Naive thymus-derived CD8-positive, alpha-beta T cell (primary cell): ENCODE measurements at regions of chr17 and their contacts with region 1.

Region 1: GRCh38 chr17:81519284-81519955 is 6.8 kb upstream of the ACTG1 start:
- DNase-seq: peak; percentile 59 to 83 (median 72)
- ATAC-seq: peak; percentile 64 to 78
- H3K4me3 Mint-ChIP-seq: peak overlapping the region in 5 of 10 donors; percentile 10 to 50 (median 48)
- H3K27ac Mint-ChIP-seq: no peak overlapping the region
- H3K4me1 Mint-ChIP-seq: peaks cover 5 to 32% (median 24%) of the 10 kb centered on the region in 4 donors
- H3K27me3 Mint-ChIP-seq: no peaks in the 10 kb centered on the region

Region 2: DNA sequence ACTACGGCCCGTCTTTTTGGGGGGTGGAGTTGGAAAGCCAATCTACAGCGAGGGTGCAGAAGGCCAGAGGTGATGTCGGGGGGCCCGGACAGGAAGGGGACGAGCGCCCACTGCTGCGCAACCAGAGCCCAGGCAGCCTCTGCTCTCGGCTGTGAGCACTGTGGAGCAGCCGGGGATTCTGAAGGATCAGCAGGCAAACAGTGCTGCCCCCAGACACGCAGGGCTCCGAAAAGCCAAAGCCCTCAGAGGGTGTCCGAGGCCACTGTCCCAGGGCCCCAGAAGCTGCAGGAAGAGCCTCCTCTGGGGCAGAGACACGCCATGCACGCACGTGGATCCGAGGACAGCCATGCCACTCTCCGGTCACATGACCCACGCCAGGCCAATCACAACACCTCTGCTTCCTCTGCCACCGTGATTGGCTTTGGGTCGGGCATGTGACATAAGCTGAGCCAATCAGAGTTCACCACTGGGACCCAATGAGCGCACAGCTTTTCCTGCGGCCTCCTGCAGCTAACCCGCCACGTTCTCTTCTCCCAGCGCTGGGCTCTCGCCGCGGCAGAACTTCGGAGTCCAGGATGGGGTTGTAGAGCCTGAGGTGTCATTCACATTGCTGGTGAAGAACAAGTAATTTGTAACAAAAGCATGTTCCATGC is 47.5 kb before region 1 on chr17:
- POLR2A ChIA-PET with region 1: no interaction called
- DNase-seq: peak in 3 of 10 donors; percentile 21 to 40 (median 22)
- ATAC-seq: peak; percentile 54 to 59
- H3K4me3 Mint-ChIP-seq: no peak overlapping the region
- H3K27ac Mint-ChIP-seq: peak overlapping the region in 2 of 10 donors; percentile 11 to 13
- H3K4me1 Mint-ChIP-seq: no peaks in the 10 kb centered on the region
- H3K27me3 Mint-ChIP-seq: no peaks in the 10 kb centered on the region

Region 3: GRCh38 chr17:81553018-81553615 is 33.7 kb after region 1 on chr17:
- POLR2A ChIA-PET with region 1: interaction called, 140 read pairs
- DNase-seq: peak in 9 of 10 donors; percentile 57 to 85 (median 75)
- ATAC-seq: peak; percentile 73 to 76
- H3K4me3 Mint-ChIP-seq: peak overlapping the region; percentile 85 to 93 (median 89)
- H3K27ac Mint-ChIP-seq: peak overlapping the region; percentile 72 to 95 (median 92)
- H3K4me1 Mint-ChIP-seq: peaks cover 12 to 40% (median 31%) of the 10 kb centered on the region in 4 donors
- H3K27me3 Mint-ChIP-seq: no peaks in the 10 kb centered on the region